Naive thymus-derived CD4-positive, alpha-beta T cell (primary cell): ENCODE measurements at regions of chr15 and their contacts with region 1.

Region 1: DNA sequence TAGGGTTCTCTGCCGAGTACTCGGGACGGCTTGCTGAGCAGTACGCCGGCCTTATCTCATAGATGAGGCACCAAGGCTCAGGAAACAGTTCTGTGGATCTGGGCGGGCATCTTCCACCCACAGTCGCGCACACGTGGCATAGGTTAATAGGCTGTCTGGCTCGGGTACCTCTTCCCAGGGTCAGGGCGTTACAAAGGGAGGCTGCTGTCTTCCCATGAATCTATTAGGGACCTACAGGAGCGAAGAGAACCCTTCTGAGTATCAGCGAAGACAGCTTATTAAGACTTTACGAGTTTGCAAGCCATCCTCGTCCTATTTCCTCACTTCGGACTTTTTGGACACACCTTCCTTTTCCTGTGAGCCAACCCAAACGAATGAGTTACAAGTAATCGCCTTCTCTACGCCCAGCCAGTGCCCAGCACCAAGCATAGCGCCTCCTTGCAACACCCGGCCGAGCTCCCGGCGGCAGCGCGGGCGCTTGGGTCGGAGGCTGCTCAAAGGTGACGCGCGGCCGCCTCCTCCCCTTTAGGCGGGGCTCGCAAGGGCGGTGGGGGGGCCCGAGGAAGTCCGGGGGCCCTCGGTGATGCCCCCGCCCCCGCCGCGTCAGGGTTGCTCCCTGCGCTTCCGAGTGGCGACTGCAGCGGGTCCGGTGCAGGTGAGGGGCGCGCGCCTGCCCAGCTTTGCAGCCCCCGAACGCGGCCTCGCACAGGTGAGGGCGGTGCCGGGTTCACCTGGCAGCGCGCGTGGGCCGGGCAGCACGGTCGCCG is at the start of gene MCTP2:
- DNase-seq: peak; percentile 64 to 88 (median 73)
- ATAC-seq: peak; percentile 91
- H3K4me3 ChIP-seq: peak within 1 kb of the TSS; percentile 73
- H3K4me3 Mint-ChIP-seq: peak within 1 kb of the TSS; percentile 88 to 97 (median 96)
- H3K27ac ChIP-seq: peak within 1 kb of the TSS; percentile 72
- H3K27ac Mint-ChIP-seq: peak within 1 kb of the TSS; percentile 69 to 94 (median 90)
- H3K4me1 ChIP-seq: peaks cover 11 to 33% of the 10 kb centered on the region in 2 donors
- H3K4me1 Mint-ChIP-seq: peaks cover 33 to 79% (median 52%) of the 10 kb centered on the region in 7 donors
- H3K27me3 ChIP-seq: no peaks in the 10 kb centered on the region
- H3K27me3 Mint-ChIP-seq: peaks cover 0 to 2% (median 0%) of the 10 kb centered on the region in 5 donors
- total RNA-seq, gene MCTP2: 13.8 to 44.5 (median 17.8) TPM

Region 2: DNA sequence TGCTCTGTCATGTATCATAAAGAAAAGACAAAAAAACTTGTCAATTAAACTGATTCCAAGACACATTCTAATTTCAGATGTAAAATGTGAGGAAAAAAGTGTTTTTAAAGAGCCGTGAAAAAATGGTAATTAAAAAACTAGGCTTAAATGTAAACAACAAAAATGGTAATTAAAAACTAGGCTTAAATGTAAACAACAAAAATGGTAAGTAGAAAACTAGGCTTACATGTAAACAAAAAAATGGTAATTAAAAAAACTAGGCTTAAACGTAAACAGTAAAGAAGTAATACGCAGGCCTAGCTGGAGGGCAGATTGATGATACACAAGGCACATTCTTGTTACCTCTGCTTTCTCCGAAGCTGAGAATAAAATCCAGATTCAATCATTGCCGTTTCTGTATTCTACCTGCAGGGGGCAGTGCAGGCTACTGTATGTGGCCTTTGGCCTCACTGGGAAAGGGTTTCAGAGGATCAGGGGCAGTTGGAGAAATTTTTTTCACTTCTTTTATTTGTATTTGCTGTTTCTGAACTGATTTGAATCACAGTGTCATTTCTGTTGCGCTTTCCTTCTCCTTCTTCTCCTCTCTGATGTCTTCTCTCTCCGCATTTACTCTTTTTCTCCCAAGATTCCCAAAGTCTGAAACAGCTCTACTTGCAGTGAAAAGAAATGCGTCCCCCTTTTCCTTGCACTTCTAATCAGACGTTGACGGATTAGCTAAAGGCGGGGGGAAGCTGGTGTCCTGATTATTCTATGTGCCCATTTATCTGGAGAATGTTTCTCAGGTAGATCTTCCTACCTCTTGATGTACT is 66.9 kb before region 1 on chr15:
- CTCF ChIA-PET with region 1: no interaction called
- POLR2A ChIA-PET with region 1: no interaction called
- intact Hi-C with region 1: loop called in 1 of 2 experiments (anchors 1 kb)
- DNase-seq: peak in 8 of 9 donors; percentile 18 to 53 (median 35)
- ATAC-seq: peak; percentile 77
- H3K4me3 ChIP-seq: no peak overlapping the region
- H3K4me3 Mint-ChIP-seq: no peak overlapping the region
- H3K27ac ChIP-seq: no peak overlapping the region
- H3K27ac Mint-ChIP-seq: no peak overlapping the region
- H3K4me1 ChIP-seq: no peaks in the 10 kb centered on the region
- H3K4me1 Mint-ChIP-seq: peaks cover 0 to 9% (median 0%) of the 10 kb centered on the region in 7 donors
- H3K27me3 ChIP-seq: no peaks in the 10 kb centered on the region
- H3K27me3 Mint-ChIP-seq: peaks cover 0 to 30% (median 4%) of the 10 kb centered on the region in 5 donors

Region 3: DNA sequence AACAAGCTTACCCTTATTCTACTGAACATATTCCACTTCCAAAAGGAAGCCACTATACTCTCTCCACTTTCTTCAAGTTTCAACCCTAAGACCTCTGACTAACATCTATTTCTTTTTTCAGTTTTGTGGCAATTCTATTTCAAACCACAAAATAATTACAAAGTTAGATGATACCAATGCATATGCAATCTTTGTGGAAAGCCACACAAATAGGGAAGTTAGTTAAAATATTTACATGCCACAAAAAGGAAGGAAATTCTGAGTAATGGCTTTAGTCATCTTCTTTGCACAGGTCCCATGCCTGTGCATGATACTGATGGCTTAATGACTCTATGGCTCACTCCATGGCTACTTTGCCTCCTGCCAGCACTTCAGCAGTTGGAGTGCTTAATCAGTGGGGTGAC is 56.7 kb before region 1 on chr15:
- CTCF ChIA-PET with region 1: no interaction called
- POLR2A ChIA-PET with region 1: no interaction called
- intact Hi-C with region 1: loop called in 1 of 2 experiments (anchors 1 kb)
- DNase-seq: no peak
- ATAC-seq: peak; percentile 90
- H3K4me3 ChIP-seq: no peak overlapping the region
- H3K4me3 Mint-ChIP-seq: peak overlapping the region in 1 of 10 donors; percentile 4
- H3K27ac ChIP-seq: no peak overlapping the region
- H3K27ac Mint-ChIP-seq: peak overlapping the region in 1 of 9 donors; percentile 5
- H3K4me1 ChIP-seq: no peaks in the 10 kb centered on the region
- H3K4me1 Mint-ChIP-seq: peaks cover 0 to 35% (median 0%) of the 10 kb centered on the region in 7 donors
- H3K27me3 ChIP-seq: no peaks in the 10 kb centered on the region
- H3K27me3 Mint-ChIP-seq: peaks cover 0 to 22% (median 5%) of the 10 kb centered on the region in 5 donors

Region 4: GRCh38 chr15:94206463-94207167 is 24.5 kb before region 1 on chr15:
- CTCF ChIA-PET with region 1: no interaction called
- POLR2A ChIA-PET with region 1: no interaction called
- intact Hi-C with region 1: loop called in 1 of 2 experiments (anchors 1 kb)
- DNase-seq: peak in 2 of 9 donors; percentile 2 to 44
- ATAC-seq: peak; percentile 89
- H3K4me3 ChIP-seq: no peak overlapping the region
- H3K4me3 Mint-ChIP-seq: peak overlapping the region in 8 of 10 donors; percentile 4 to 82 (median 41)
- H3K27ac ChIP-seq: no peak overlapping the region
- H3K27ac Mint-ChIP-seq: peak overlapping the region in 1 of 9 donors; percentile 86
- H3K4me1 ChIP-seq: no peaks in the 10 kb centered on the region
- H3K4me1 Mint-ChIP-seq: peaks cover 6 to 37% (median 12%) of the 10 kb centered on the region in 7 donors
- H3K27me3 ChIP-seq: no peaks in the 10 kb centered on the region
- H3K27me3 Mint-ChIP-seq: peaks cover 10 to 38% (median 31%) of the 10 kb centered on the region in 5 donors

Region 5: DNA sequence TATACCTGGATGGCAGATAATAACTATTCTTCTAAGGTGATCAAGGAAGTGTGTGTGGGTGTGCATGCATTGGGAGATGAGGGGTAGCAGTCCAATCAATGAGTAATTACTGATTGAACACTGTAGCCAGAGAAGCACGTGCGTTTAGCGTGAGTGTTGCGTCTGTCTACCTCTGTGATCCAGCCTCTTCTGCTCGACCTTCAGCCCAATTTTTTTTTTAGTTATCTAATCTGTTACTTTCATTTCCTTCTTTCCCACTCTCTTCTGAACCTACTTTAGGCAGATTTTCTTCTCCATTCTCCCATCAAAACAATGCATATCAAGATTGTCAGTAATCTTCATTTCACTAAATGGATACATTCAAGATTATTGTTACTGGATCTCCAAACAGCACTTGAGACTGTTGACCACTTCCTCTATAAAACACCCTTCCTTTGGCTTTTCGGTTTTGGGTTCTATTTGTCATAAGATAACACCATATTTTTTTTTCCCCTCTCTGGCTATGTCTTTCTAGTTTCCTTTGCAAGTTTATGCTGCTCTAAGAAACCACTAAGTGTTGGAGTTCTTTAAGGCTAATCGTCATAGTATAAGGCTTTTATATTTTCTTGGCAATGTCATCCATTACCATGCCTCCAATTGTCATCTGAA is 41.2 kb after region 1 on chr15:
- CTCF ChIA-PET with region 1: no interaction called
- POLR2A ChIA-PET with region 1: no interaction called
- intact Hi-C with region 1: loop called in 1 of 2 experiments (anchors 1 kb)
- DNase-seq: no peak
- ATAC-seq: peak; percentile 86
- H3K4me3 ChIP-seq: no peak overlapping the region
- H3K4me3 Mint-ChIP-seq: no peak overlapping the region
- H3K27ac ChIP-seq: no peak overlapping the region
- H3K27ac Mint-ChIP-seq: no peak overlapping the region
- H3K4me1 ChIP-seq: peaks cover 0 to 31% of the 10 kb centered on the region in 2 donors
- H3K4me1 Mint-ChIP-seq: peaks cover 0 to 18% (median 7%) of the 10 kb centered on the region in 7 donors
- H3K27me3 ChIP-seq: no peaks in the 10 kb centered on the region
- H3K27me3 Mint-ChIP-seq: peaks cover 0 to 3% (median 0%) of the 10 kb centered on the region in 5 donors

Region 6: GRCh38 chr15:94287794-94288246 is 56.7 kb after region 1 on chr15:
- CTCF ChIA-PET with region 1: no interaction called
- POLR2A ChIA-PET with region 1: interaction called, 3 read pairs
- intact Hi-C with region 1: loop called in 1 of 2 experiments (anchors 1 kb)
- DNase-seq: peak in 4 of 9 donors; percentile 4 to 48 (median 12)
- ATAC-seq: peak; percentile 95
- H3K4me3 ChIP-seq: no peak overlapping the region
- H3K4me3 Mint-ChIP-seq: peak overlapping the region in 7 of 10 donors; percentile 3 to 86 (median 36)
- H3K27ac ChIP-seq: no peak overlapping the region
- H3K27ac Mint-ChIP-seq: peak overlapping the region in 2 of 9 donors; percentile 44 to 90
- H3K4me1 ChIP-seq: peaks cover 0 to 19% of the 10 kb centered on the region in 2 donors
- H3K4me1 Mint-ChIP-seq: peaks cover 11 to 55% (median 33%) of the 10 kb centered on the region in 7 donors
- H3K27me3 ChIP-seq: no peaks in the 10 kb centered on the region
- H3K27me3 Mint-ChIP-seq: no peaks in the 10 kb centered on the region

Region 7: DNA sequence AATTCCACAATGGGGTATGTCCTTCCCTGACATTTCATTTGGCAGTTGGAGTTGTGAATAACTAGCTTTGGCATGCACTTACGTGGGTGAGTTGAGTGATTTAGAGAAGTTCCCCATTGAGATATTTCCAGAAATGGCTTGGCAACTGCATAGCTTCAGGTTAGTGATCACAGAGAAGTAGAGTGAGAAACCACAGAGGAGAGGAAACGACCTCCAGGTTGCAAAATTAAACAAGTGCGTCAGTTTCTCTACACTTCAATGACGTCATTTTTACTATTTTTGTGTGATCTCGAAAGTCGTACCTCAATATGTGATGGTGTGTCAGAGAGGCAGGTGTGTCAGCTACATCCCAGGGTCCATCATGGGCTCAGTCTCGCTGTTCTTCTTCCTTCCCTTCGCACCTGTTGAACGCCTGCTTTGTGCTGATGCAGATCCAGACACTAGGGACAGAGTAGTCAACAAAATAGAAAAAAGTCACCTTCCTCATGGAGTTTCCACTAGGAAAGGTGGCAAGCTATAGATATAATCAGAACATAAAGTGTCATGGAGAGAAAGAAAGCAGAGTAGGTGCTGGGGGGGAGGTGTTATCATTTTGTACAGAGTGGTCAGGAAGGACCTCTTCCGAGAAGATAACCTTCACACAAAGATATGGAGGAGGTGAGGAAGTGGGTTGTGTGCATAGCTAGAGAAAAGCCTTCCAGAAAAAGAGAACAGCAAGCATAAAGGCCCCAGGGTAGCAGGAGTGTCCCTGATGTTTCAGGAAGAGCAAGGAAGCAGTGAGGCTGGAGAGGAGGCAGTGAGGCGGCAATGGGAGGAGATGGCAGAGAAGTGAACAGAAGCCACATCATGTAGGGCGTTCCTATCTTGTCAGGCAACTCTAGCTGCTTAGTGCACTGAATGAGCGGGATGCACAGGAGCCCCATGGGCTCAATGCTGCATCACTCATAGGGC is 75.8 kb after region 1 on chr15:
- CTCF ChIA-PET with region 1: no interaction called
- POLR2A ChIA-PET with region 1: no interaction called
- intact Hi-C with region 1: loop called in 1 of 2 experiments (anchors 1 kb)
- DNase-seq: no peak
- ATAC-seq: peak; percentile 61
- H3K4me3 ChIP-seq: peak overlapping the region; percentile 19
- H3K4me3 Mint-ChIP-seq: peak overlapping the region in 2 of 10 donors; percentile 10 to 54
- H3K27ac ChIP-seq: no peak overlapping the region
- H3K27ac Mint-ChIP-seq: peak overlapping the region in 2 of 9 donors; percentile 29 to 89
- H3K4me1 ChIP-seq: peaks cover 0 to 30% of the 10 kb centered on the region in 2 donors
- H3K4me1 Mint-ChIP-seq: peaks cover 6 to 61% (median 11%) of the 10 kb centered on the region in 7 donors
- H3K27me3 ChIP-seq: no peaks in the 10 kb centered on the region
- H3K27me3 Mint-ChIP-seq: no peaks in the 10 kb centered on the region